CD8-positive, alpha-beta memory T cell (primary cell): ENCODE measurements at regions of chr15 and their contacts with region 1.

Region 1: DNA sequence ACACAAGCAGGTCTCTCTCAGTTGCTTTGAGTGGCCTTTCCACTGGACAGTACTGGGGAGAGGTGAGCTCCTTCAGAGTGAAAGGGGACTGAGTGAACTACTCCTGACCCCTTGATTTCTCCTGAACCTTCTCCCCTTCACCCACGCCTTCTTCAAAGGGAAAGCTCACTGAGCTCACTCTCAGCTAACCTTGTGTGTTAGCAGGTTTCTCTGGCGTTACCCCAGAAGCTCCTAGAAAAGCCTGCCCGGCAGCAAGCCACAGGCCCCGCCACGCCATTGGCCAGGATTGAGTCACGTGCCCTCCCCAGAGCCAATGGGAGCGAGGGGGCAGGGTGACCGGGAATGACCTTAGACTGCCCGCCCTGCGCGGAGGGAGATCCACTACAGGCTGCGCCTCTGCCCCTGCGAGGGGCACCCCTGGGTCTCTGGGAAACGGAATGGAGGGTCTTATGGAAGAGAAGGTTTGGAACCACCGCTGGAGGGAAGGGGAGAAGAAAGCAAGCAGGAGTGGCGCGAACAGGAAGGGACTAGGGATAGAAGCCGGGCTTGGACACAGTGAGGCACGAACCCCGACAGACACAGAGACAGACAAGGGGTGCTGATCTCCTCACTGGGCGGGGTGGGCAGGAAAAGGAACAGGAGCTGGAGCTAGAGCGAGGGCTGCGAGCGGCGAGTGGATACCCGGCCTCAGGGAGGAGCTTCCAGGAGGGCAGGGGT is 17.4 kb upstream of the CLK3 start:
- DNase-seq: peak; percentile 78 to 89 (median 84)
- H3K4me3 ChIP-seq: peak overlapping the region; percentile 93
- H3K4me3 Mint-ChIP-seq: peak overlapping the region; percentile 89 to 100 (median 97)
- H3K27ac ChIP-seq: peak overlapping the region; percentile 83
- H3K27ac Mint-ChIP-seq: peak overlapping the region; percentile 73 to 100 (median 99)
- H3K4me1 ChIP-seq: peaks cover 20% of the 10 kb centered on the region
- H3K4me1 Mint-ChIP-seq: peaks cover 19 to 21% (median 20%) of the 10 kb centered on the region in 3 donors
- H3K27me3 ChIP-seq: no peaks in the 10 kb centered on the region
- H3K27me3 Mint-ChIP-seq: no peaks in the 10 kb centered on the region

Region 2: GRCh38 chr15:74489518-74490338 is 108.6 kb before region 1 on chr15:
- CTCF ChIA-PET with region 1: no interaction called
- POLR2A ChIA-PET with region 1: no interaction called
- DNase-seq: peak; percentile 53 to 83 (median 63)
- H3K4me3 ChIP-seq: no peak overlapping the region
- H3K4me3 Mint-ChIP-seq: peak overlapping the region; percentile 5 to 67 (median 51)
- H3K27ac ChIP-seq: no peak overlapping the region
- H3K27ac Mint-ChIP-seq: peak overlapping the region; percentile 21 to 87 (median 56)
- H3K4me1 ChIP-seq: peaks cover 10% of the 10 kb centered on the region
- H3K4me1 Mint-ChIP-seq: peaks cover 12 to 18% (median 14%) of the 10 kb centered on the region in 3 donors
- H3K27me3 ChIP-seq: no peaks in the 10 kb centered on the region
- H3K27me3 Mint-ChIP-seq: no peaks in the 10 kb centered on the region

Region 3: GRCh38 chr15:74615508-74616365 is 17.5 kb after region 1 on chr15 and contains the start of gene CLK3:
- CTCF ChIA-PET with region 1: interaction called, 3 read pairs
- POLR2A ChIA-PET with region 1: interaction called, 20 read pairs
- DNase-seq: peak; percentile 91 to 96 (median 95)
- H3K4me3 ChIP-seq: peak within 1 kb of the TSS; percentile 95
- H3K4me3 Mint-ChIP-seq: peak within 1 kb of the TSS; percentile 93 to 98 (median 94)
- H3K27ac ChIP-seq: peak within 1 kb of the TSS; percentile 97
- H3K27ac Mint-ChIP-seq: peak within 1 kb of the TSS; percentile 97 to 99 (median 98)
- H3K4me1 ChIP-seq: peaks cover 35% of the 10 kb centered on the region
- H3K4me1 Mint-ChIP-seq: peaks cover 38 to 53% (median 41%) of the 10 kb centered on the region in 3 donors
- H3K27me3 ChIP-seq: no peaks in the 10 kb centered on the region
- H3K27me3 Mint-ChIP-seq: no peaks in the 10 kb centered on the region
- total RNA-seq, gene CLK3: 96.8 to 101 TPM